ENCODE measurements at regions of chr14 and their contacts with region 1.

Region 1: GRCh38 chr14:99729991-99730868 is 46.1 kb downstream of the CYP46A1 start:
- DNase-seq: peak in 4 of 5 donors; percentile 52 to 63 (median 56)
- H3K4me3 ChIP-seq: no peak overlapping the region
- H3K4me3 Mint-ChIP-seq: peak overlapping the region in 4 of 8 donors; percentile 32 to 64 (median 48)
- H3K27ac ChIP-seq: no peak overlapping the region
- H3K27ac Mint-ChIP-seq: peak overlapping the region in 1 of 7 donors; percentile 61
- H3K4me1 ChIP-seq: no peaks in the 10 kb centered on the region
- H3K4me1 Mint-ChIP-seq: no peaks in the 10 kb centered on the region
- H3K27me3 ChIP-seq: peaks cover 2% of the 10 kb centered on the region
- H3K27me3 Mint-ChIP-seq: peaks cover 20 to 33% of the 10 kb centered on the region in 2 donors

Region 2: GRCh38 chr14:99654235-99654966 is 75.8 kb before region 1 on chr14:
- CTCF ChIA-PET with region 1: no interaction called
- POLR2A ChIA-PET with region 1: no interaction called
- intact Hi-C with region 1: no loop called
- DNase-seq: no peak
- H3K4me3 ChIP-seq: no peak overlapping the region
- H3K4me3 Mint-ChIP-seq: no peak overlapping the region
- H3K27ac ChIP-seq: no peak overlapping the region
- H3K27ac Mint-ChIP-seq: no peak overlapping the region
- H3K4me1 ChIP-seq: no peaks in the 10 kb centered on the region
- H3K4me1 Mint-ChIP-seq: peaks cover 0 to 5% (median 2%) of the 10 kb centered on the region in 4 donors
- H3K27me3 ChIP-seq: peaks cover 11% of the 10 kb centered on the region
- H3K27me3 Mint-ChIP-seq: peaks cover 30 to 41% of the 10 kb centered on the region in 2 donors

Region 3: DNA sequence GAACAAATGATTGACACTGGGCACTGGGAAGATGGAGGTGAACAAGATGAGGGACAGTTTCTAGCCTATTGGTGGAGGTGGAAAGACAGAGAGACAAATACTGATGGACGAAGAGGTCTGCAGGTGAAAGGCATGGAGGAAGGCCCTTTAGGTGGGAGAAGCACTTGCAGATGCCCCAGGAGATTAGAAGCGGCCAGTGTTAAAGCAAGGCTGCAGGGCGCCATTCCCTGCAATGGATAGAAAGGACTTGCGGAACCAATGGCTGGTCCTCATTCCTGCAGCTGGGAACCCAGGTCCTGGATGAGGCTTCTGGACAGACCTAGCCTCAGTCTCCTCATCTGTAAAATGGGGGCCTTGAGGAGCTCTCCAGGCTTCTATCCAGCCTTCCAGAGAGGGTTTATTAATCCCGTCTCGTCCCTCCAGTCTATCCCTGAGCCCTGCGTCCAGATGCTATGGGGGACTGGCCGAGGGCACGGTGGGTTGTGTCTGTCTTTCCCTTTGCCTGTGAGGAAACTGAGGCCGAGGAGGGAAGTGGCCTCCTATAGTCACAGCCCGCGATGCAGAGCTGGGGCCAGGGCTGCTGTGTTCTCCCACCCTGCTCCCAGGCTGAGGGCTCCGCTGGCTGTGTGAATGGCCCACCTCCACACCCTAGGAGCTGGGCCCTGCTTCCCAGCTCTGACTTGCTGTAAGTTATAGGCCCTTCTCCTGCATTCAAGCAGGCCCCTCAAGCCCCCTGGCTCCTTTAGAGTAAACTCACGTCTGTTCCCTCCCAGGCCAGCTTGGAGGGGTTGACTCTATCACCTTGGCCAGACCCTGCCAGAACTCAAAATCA is 13.2 kb before region 1 on chr14:
- CTCF ChIA-PET with region 1: interaction called, 10 read pairs
- POLR2A ChIA-PET with region 1: no interaction called
- intact Hi-C with region 1: no loop called
- DNase-seq: no peak
- H3K4me3 ChIP-seq: no peak overlapping the region
- H3K4me3 Mint-ChIP-seq: no peak overlapping the region
- H3K27ac ChIP-seq: no peak overlapping the region
- H3K27ac Mint-ChIP-seq: peak overlapping the region in 1 of 7 donors; percentile 12
- H3K4me1 ChIP-seq: no peaks in the 10 kb centered on the region
- H3K4me1 Mint-ChIP-seq: peaks cover 0 to 2% (median 0%) of the 10 kb centered on the region in 4 donors
- H3K27me3 ChIP-seq: no peaks in the 10 kb centered on the region
- H3K27me3 Mint-ChIP-seq: peaks cover 5% of the 10 kb centered on the region in 2 donors

Region 4: DNA sequence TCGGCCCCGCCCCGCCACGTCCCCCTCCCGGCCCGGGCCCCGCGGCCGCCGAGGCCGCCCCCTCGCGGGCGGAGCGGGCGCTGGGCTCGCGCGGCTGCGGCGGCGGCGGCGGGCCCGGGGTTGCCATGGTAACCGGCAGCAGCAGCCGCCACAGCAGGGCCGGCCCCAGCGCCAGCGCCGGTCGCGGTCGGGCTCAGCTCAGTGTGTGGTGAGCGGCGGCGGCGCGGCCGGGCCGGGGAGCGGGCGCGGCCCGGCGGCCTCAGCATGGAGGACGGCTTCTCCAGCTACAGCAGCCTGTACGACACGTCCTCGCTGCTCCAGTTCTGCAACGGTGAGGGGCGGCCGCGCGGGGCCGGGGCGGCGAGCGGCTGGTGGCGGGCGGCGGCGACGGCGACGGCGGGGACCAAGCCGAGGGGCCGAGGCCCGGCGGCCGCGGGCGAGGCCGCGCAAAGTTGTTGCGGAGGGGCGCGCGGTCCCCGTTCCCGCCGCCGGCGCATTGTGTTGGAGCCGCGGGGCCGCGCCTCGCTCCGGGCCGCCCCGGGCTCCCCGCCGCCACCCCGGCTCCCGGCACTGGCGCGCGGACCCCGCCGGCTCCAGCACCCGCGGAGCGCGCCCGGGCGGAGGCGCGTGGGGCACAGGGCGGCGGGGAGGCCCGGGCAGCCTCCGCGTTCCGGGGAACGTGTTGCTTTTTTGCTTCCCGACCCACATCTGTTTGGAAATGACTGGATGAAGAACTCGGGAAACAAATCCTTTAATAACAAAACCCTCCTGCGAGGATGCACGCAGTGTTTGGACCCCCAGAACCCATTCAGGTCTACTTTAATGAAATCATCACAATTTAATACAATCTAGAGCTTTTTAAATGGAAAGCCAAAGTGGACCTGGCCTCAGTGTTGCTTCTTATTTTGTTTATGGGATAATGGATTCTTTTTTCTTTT is 63.3 kb after region 1 on chr14 and contains the start of gene EML1:
- CTCF ChIA-PET with region 1: interaction called, 4 read pairs
- POLR2A ChIA-PET with region 1: no interaction called
- intact Hi-C with region 1: loop called (anchors 1 kb)
- DNase-seq: peak; percentile 55 to 79 (median 75)
- H3K4me3 ChIP-seq: no peak within 1 kb of the TSS
- H3K4me3 Mint-ChIP-seq: peak within 1 kb of the TSS; percentile 69 to 89 (median 80)
- H3K27ac ChIP-seq: no peak within 1 kb of the TSS
- H3K27ac Mint-ChIP-seq: peak within 1 kb of the TSS; percentile 14 to 80 (median 50)
- H3K4me1 ChIP-seq: peaks cover 7% of the 10 kb centered on the region
- H3K4me1 Mint-ChIP-seq: peaks cover 5 to 19% (median 12%) of the 10 kb centered on the region in 4 donors
- H3K27me3 ChIP-seq: peaks cover 11% of the 10 kb centered on the region
- H3K27me3 Mint-ChIP-seq: peaks cover 6 to 7% of the 10 kb centered on the region in 2 donors
- total RNA-seq, gene EML1: 0.22 to 0.23 TPM

Region 5: DNA sequence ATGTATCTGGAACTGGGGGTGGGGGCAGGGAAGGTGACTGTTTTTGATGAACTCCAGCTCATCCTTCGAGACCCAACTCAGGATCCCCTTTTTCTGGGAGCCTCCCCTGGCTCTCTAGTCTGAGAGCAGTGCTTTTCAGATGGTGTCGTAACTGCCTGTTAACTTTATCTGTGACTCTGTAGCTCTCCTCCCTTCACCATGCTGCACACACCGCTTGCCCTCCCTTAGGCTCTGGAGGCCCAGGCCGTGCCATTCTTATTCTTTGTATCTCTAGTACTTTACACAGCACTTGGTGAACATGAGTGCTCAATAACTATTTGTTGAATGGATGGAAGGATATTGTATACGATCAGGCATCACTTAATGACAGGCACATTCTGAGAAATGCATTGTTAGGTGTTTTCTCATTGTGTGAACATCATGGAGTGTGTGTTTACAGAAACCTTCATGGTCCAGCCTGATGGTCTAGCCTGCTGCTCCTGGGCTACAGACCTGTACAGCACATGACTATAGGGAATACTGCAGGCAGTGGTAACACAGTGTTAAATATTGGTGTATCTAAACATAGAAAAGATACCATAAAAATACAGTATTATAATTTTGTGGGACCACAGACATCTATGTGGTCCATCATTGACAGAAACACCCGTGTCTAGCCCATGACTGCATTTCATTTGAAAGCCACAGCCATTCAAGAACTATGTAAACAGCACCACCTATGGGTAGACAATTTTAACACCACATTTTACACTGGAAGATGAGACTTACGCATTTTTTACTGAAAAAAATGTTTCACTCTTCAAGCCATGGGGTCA is 154.8 kb after region 1 on chr14:
- CTCF ChIA-PET with region 1: interaction called, 31 read pairs
- POLR2A ChIA-PET with region 1: no interaction called
- intact Hi-C with region 1: loop called (anchors 1 kb)
- DNase-seq: peak; percentile 41 to 64 (median 58)
- H3K4me3 ChIP-seq: no peak overlapping the region
- H3K4me3 Mint-ChIP-seq: no peak overlapping the region
- H3K27ac ChIP-seq: no peak overlapping the region
- H3K27ac Mint-ChIP-seq: no peak overlapping the region
- H3K4me1 ChIP-seq: no peaks in the 10 kb centered on the region
- H3K4me1 Mint-ChIP-seq: no peaks in the 10 kb centered on the region
- H3K27me3 ChIP-seq: peaks cover 4% of the 10 kb centered on the region
- H3K27me3 Mint-ChIP-seq: peaks cover 12 to 13% of the 10 kb centered on the region in 2 donors

Measured in CD4-positive, alpha-beta memory T cell (primary cell).